Activated naive CD4-positive, alpha-beta T cell treated with anti-CD3 and anti-CD28 coated beads for 36 hours (primary cell): ENCODE measurements at regions of chr2 and their contacts with region 1.

Region 1: GRCh38 chr2:64330281-64331113 is 123.5 kb upstream of the LGALSL start:
- DNase-seq: peak; percentile 89
- H3K4me3 Mint-ChIP-seq: no peak overlapping the region
- H3K27ac Mint-ChIP-seq: no peak overlapping the region
- H3K4me1 Mint-ChIP-seq: peaks cover 41% of the 10 kb centered on the region
- H3K27me3 Mint-ChIP-seq: no peaks in the 10 kb centered on the region

Region 2: GRCh38 chr2:63692002-63692606 is 638.4 kb before region 1 on chr2:
- CTCF ChIA-PET with region 1: interaction called, 3 read pairs
- intact Hi-C with region 1: loop called (anchors 1 kb)
- DNase-seq: peak; percentile 40
- H3K4me3 Mint-ChIP-seq: no peak overlapping the region
- H3K27ac Mint-ChIP-seq: no peak overlapping the region
- H3K4me1 Mint-ChIP-seq: no peaks in the 10 kb centered on the region
- H3K27me3 Mint-ChIP-seq: no peaks in the 10 kb centered on the region

Region 3: GRCh38 chr2:64036034-64036705 is 294.3 kb before region 1 on chr2:
- CTCF ChIA-PET with region 1: interaction called, 14 read pairs
- intact Hi-C with region 1: loop called (anchors 1 kb)
- DNase-seq: peak; percentile 37
- H3K4me3 Mint-ChIP-seq: peak overlapping the region; percentile 25
- H3K27ac Mint-ChIP-seq: peak overlapping the region; percentile 70
- H3K4me1 Mint-ChIP-seq: peaks cover 50% of the 10 kb centered on the region
- H3K27me3 Mint-ChIP-seq: no peaks in the 10 kb centered on the region

Region 4: GRCh38 chr2:64133828-64134227 is 196.7 kb before region 1 on chr2:
- CTCF ChIA-PET with region 1: interaction called, 6 read pairs
- intact Hi-C with region 1: loop called (anchors 1 kb)
- DNase-seq: no peak
- H3K4me3 Mint-ChIP-seq: no peak overlapping the region
- H3K27ac Mint-ChIP-seq: peak overlapping the region; percentile 72
- H3K4me1 Mint-ChIP-seq: peaks cover 88% of the 10 kb centered on the region
- H3K27me3 Mint-ChIP-seq: no peaks in the 10 kb centered on the region

Region 5: DNA sequence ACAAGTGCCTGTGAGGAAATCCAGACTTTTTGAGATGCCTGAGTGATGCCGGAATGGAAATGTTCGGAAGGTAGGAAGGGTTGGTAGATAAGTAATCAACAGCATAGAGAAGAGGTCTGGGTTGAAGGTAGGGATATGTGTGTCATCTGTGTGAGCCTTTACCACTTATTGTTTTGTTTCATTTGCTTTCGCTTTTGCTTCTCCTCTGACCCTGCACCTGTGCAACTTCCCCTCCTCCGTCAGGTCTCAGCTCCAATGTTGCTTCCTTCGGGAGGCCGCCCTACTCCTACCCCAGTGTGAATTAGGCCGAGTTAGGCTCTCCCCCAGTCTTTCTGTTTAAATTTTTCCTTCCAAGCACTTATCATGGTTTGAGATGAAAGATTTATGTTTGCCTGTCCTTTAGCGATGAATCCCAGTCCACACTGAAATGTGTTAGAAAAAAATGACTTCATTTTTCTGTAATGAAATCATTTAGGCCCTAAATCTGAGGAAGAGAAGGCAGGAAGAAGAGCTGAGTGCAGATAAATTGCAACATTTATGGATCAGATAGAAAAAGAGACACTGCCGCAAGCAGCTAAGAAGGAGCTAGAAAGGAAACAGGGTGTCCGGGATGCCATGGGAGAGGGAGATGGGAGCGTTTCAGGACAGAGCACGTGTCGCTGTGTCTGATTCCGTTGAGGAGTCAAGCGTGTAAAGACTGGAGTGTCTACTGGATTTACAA is 46.7 kb before region 1 on chr2:
- CTCF ChIA-PET with region 1: interaction called, 3 read pairs
- intact Hi-C with region 1: loop called (anchors 1 kb)
- DNase-seq: peak; percentile 42
- H3K4me3 Mint-ChIP-seq: no peak overlapping the region
- H3K27ac Mint-ChIP-seq: no peak overlapping the region
- H3K4me1 Mint-ChIP-seq: no peaks in the 10 kb centered on the region
- H3K27me3 Mint-ChIP-seq: no peaks in the 10 kb centered on the region

Region 6: GRCh38 chr2:64488050-64488974 is 157.8 kb after region 1 on chr2:
- CTCF ChIA-PET with region 1: interaction called, 232 read pairs
- intact Hi-C with region 1: loop called (anchors 1 kb)
- DNase-seq: peak; percentile 88
- H3K4me3 Mint-ChIP-seq: no peak overlapping the region
- H3K27ac Mint-ChIP-seq: no peak overlapping the region
- H3K4me1 Mint-ChIP-seq: peaks cover 7% of the 10 kb centered on the region
- H3K27me3 Mint-ChIP-seq: no peaks in the 10 kb centered on the region

Region 7: GRCh38 chr2:64750817-64751285 is 420.4 kb after region 1 on chr2:
- CTCF ChIA-PET with region 1: no interaction called
- intact Hi-C with region 1: loop called (anchors 2 kb)
- DNase-seq: peak; percentile 99
- H3K4me3 Mint-ChIP-seq: peak overlapping the region; percentile 99
- H3K27ac Mint-ChIP-seq: peak overlapping the region; percentile 89
- H3K4me1 Mint-ChIP-seq: peaks cover 30% of the 10 kb centered on the region
- H3K27me3 Mint-ChIP-seq: no peaks in the 10 kb centered on the region